Ascending aorta (tissue), 2 donors: ENCODE measurements at regions of chrX and their contacts with region 1.

Region 1: DNA sequence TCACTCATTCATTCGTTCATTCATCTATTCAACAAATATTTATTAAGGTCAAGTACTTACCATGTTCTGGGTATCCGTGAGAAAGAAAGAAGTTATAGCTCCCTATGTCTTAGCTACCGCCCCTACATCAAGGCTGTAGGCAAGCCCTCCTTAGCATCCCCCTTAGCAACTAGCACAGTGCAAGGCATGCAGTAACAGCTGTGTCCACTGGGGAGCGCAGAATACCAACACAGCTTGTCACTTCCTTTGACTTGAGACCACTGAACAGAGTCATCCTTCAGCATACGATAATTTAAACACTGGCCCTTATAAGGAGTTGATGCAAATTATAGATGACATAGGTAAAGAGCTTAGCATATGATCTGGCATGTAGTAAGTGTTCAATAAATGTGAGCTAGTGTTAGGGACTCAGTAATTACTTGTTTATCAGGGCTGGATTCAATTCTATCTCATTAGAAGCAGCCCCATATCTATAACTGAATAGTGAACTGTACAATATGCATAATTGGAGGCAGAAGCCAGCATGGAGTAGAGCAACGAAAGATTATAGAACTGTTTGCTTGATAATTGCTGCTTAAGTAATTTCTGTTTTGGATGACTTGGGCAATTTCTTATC is 8.7 kb downstream of the KIAA1210 start:
- DNase-seq: no peak
- H3K4me3 ChIP-seq: no peak overlapping the region
- H3K27ac ChIP-seq: no peak overlapping the region
- H3K4me1 ChIP-seq: no peaks in the 10 kb centered on the region
- H3K27me3 ChIP-seq: no peaks in the 10 kb centered on the region
- CTCF ChIP-seq: peak; percentile 39 to 74 (median 57)

Region 2: DNA sequence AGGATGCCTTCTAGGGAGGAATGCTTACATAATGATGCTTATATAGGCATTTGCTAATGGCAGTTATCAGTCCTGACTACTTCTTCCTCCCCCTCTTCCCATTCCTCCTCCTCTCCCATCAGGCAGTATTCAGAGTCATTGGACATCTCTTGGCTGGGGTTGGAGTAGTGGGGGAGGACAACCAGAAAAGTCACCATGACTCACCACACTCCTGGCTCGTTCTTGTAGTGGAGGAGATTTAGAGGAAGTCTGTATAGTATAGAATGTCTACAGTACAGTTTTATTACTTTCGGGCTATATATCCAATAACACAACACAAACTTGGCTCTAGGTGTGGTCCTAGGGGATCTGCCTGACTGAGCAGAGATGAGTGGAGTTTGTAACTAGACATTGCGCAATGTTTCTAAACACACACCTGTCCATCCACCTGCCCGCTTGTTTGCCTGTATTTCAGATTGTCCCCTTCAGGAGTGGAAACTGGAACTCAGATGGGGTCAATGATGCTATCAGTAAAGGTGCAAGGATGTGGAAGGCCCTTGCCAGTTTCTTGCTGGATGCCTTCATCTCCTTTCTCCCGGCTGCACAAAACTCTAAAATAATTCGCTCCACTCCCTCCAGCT is 36.6 kb after region 1 on chrX:
- intact Hi-C with region 1: no loop called
- DNase-seq: no peak
- H3K4me3 ChIP-seq: no peak overlapping the region
- H3K27ac ChIP-seq: no peak overlapping the region
- H3K4me1 ChIP-seq: no peaks in the 10 kb centered on the region
- H3K27me3 ChIP-seq: no peaks in the 10 kb centered on the region
- CTCF ChIP-seq: no peak

Region 3: DNA sequence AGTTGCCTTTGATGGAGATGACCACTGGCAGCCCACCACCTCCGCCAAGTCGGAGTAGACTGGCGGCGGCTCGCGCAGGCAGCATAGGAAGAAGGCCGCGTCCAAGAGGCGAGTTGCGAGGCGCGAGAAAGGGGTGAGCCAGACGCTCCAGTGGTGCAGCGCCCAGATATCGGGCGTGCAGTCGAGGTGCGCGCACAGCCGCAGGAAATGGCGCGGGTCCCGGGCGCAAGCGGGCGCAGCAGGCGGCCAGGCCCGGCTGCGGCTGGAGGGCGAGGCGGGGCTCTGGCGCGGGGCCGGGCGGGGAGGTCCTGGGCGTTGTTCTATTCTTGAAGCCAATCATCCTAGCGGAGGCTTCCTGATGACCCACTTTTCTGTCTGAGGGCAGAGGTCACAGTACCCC is 104.0 kb after region 1 on chrX:
- intact Hi-C with region 1: loop called (anchors 1 kb)
- DNase-seq: no peak
- H3K4me3 ChIP-seq: no peak overlapping the region
- H3K27ac ChIP-seq: no peak overlapping the region
- H3K4me1 ChIP-seq: no peaks in the 10 kb centered on the region
- H3K27me3 ChIP-seq: no peaks in the 10 kb centered on the region
- CTCF ChIP-seq: no peak

Region 4: GRCh38 chrX:119266364-119266995 is 147.6 kb after region 1 on chrX:
- intact Hi-C with region 1: loop called (anchors 2 kb)
- DNase-seq: no peak
- H3K4me3 ChIP-seq: no peak overlapping the region
- H3K27ac ChIP-seq: no peak overlapping the region
- H3K4me1 ChIP-seq: no peaks in the 10 kb centered on the region
- H3K27me3 ChIP-seq: no peaks in the 10 kb centered on the region
- CTCF ChIP-seq: peak in 2 of 3 experiments; percentile 52 to 63